ENCODE measurements at regions of chr3 and their contacts with region 1.

Region 1: GRCh38 chr3:196432137-196432879 is at the start of gene UBXN7:
- DNase-seq: peak; percentile 95 to 99 (median 95)
- ATAC-seq: peak; percentile 96 to 98 (median 97)
- H3K4me3 ChIP-seq: peak within 1 kb of the TSS; percentile 55 to 99 (median 90)
- H3K27ac ChIP-seq: peak within 1 kb of the TSS; percentile 78 to 98 (median 94)
- H3K4me1 ChIP-seq: peaks cover 0 to 32% (median 21%) of the 10 kb centered on the region in 12 donors
- H3K27me3 ChIP-seq: no peaks in the 10 kb centered on the region
- CTCF ChIP-seq: no peak
- POLR2A ChIP-seq: peak in 1 of 2 donors; percentile 90
- total RNA-seq, gene UBXN7: 10.3 to 50.2 (median 29.5) TPM

Region 2: DNA sequence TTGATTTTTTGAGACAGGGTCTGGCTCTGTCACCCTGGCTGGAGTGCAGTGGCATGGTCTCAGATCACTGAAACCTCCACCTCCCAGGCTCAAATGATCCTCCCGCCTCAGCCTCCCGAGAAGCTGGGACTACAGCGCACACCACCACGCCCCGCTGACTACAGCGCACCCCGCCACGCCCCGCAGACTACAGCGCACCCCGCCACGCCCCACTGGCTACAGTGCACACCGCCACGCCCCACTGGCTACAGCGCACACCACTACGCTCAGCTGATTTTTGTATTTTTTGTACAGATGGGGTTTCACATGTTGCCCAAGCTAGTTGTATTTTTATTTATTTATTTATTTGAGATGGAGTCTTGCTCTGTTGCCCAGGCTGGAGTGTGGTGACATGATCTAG is 180.4 kb before region 1 on chr3:
- intact Hi-C with region 1: loop called in 1 of 10 experiments (anchors 10 kb)
- DNase-seq: no peak
- ATAC-seq: peak in 1 of 4 donors; percentile 53
- H3K4me3 ChIP-seq: no peak overlapping the region
- H3K27ac ChIP-seq: no peak overlapping the region
- H3K4me1 ChIP-seq: no peaks in the 10 kb centered on the region
- H3K27me3 ChIP-seq: no peaks in the 10 kb centered on the region
- CTCF ChIP-seq: no peak
- POLR2A ChIP-seq: no peak

Region 3: DNA sequence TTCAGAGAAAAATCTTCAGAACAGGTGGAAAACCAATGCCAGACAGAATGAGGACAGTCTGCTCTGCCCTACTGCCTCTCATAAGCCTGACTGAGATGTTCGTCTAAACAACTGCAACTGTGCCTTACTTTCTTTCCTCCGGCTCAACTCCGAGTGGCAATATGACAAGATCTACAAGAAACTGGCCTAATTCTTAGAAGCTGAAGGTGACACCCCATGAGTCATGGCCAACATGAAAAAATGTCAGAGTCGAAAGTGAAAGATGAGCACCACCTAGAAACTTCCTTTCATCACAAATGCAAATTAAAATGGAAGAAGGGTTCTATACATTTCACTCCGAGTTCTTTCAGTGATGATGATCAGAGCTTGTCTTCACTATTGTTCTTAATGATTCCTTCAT is 157.7 kb before region 1 on chr3:
- intact Hi-C with region 1: loop called in 1 of 10 experiments (anchors 10 kb)
- DNase-seq: no peak
- ATAC-seq: no peak
- H3K4me3 ChIP-seq: no peak overlapping the region
- H3K27ac ChIP-seq: peak overlapping the region in 1 of 12 donors; percentile 79
- H3K4me1 ChIP-seq: peaks cover 0 to 45% (median 22%) of the 10 kb centered on the region in 12 donors
- H3K27me3 ChIP-seq: no peaks in the 10 kb centered on the region
- CTCF ChIP-seq: no peak
- POLR2A ChIP-seq: no peak

Measured in heart left ventricle (tissue), 16 donors.